Motor neuron (in vitro differentiated cells): ENCODE measurements at regions of chr11 and their contacts with region 1.

Region 1: DNA sequence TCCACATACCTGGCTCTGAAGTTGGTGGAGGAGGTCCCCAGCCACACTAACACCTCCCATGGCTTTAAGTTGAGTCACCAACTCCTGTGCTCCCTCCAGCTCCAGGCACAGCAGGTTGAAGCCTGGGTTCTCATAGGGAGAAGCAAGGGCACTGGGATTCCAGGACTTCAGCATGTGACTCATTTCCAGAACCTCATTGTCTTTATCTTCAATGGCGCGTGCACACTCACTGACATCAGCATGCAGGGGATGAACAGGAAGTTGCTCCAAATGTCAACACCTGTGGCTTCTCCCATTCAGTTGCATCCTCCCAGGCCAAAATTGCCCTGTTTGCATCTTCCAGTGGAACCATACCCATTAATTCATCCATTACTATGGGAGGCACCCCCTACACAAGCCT is 5.8 kb upstream of the UBQLNL start:
- ATAC-seq: no peak
- H3K4me3 ChIP-seq: no peak overlapping the region
- H3K27ac ChIP-seq: no peak overlapping the region
- H3K4me1 ChIP-seq: no peaks in the 10 kb centered on the region

Region 2: DNA sequence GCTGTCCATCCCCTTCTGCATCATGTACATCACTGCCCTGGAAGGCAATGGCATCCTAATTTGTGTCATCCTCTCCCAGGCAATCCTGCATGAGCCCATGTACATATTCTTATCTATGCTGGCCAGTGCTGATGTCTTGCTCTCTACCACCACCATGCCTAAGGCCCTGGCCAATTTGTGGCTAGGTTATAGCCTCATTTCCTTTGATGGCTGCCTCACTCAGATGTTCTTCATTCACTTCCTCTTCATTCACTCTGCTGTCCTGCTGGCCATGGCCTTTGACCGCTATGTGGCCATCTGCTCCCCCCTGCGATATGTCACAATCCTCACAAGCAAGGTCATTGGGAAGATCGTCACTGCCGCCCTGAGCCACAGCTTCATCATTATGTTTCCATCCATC is 58.7 kb after region 1 on chr11:
- in situ Hi-C with region 1: loop called in 1 of 9 experiments (anchors 10 kb)
- ATAC-seq: no peak
- H3K4me3 ChIP-seq: no peak overlapping the region
- H3K27ac ChIP-seq: no peak overlapping the region
- H3K4me1 ChIP-seq: no peaks in the 10 kb centered on the region

Region 3: GRCh38 chr11:5808500-5809121 is 286.3 kb after region 1 on chr11 and contains the start of gene OR52N2:
- in situ Hi-C with region 1: no loop called
- ATAC-seq: peak; percentile 85 to 100 (median 96)
- H3K4me3 ChIP-seq: peak within 1 kb of the TSS; percentile 12 to 28 (median 13)
- H3K27ac ChIP-seq: no peak within 1 kb of the TSS
- H3K4me1 ChIP-seq: no peaks in the 10 kb centered on the region
- total RNA-seq, gene OR52N2: 0.66 TPM in 1 of 8 experiments, not detected in the others